Activated CD4-positive, alpha-beta T cell treated with anti-CD3 and anti-CD28 coated beads for 36 hours (primary cell): ENCODE measurements at regions of chr15 and their contacts with region 1.

Region 1: DNA sequence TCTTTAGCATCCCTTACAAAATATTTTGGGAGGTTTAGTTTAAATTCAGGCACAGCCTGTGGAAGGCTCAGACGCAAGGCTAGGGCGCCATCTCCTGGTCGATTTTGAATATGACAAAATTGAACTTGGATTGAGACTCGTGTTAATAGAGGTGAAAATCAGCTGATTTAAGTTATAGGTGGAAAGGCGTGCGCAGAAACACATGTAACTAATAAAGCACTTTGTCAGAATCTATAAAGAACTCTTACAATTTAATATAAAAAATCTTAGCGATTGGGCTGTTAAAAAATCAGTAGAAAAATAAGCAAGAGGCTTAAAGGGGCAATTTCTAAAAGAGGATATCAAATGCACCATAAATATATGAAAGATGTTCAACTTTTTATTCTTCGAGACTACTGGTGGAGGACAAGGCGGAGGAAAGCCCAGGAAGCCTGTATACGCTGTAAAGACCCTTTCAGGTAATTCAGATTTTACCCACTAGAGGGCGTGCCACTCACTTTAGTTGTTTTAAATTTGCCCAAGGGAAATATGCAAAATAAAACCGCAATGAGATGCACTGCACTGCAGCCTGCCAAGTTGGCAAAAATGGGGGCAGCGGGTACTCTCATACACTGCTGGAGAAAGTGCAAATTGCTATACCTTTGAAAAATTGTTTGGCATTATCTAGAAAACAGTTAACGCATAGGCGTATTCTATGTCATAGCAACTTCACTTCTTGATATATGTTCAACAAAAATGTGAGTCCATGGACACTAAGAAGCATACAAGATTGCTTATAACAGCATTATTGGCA is 64.7 kb downstream of the SLC30A4 start:
- DNase-seq: peak; percentile 82
- ATAC-seq: peak; percentile 59
- H3K4me3 Mint-ChIP-seq: peak overlapping the region; percentile 73
- H3K27ac Mint-ChIP-seq: peak overlapping the region; percentile 80
- H3K4me1 Mint-ChIP-seq: peaks cover 44% of the 10 kb centered on the region
- H3K27me3 Mint-ChIP-seq: no peaks in the 10 kb centered on the region

Region 2: GRCh38 chr15:43913026-43913927 is 1544.6 kb before region 1 on chr15:
- CTCF ChIA-PET with region 1: no interaction called
- POLR2A ChIA-PET with region 1: no interaction called
- intact Hi-C with region 1: no loop called
- DNase-seq: peak; percentile 26
- ATAC-seq: peak; percentile 68
- H3K4me3 Mint-ChIP-seq: no peak overlapping the region
- H3K27ac Mint-ChIP-seq: no peak overlapping the region
- H3K4me1 Mint-ChIP-seq: peaks cover 3% of the 10 kb centered on the region
- H3K27me3 Mint-ChIP-seq: peaks cover 2% of the 10 kb centered on the region

Region 3: DNA sequence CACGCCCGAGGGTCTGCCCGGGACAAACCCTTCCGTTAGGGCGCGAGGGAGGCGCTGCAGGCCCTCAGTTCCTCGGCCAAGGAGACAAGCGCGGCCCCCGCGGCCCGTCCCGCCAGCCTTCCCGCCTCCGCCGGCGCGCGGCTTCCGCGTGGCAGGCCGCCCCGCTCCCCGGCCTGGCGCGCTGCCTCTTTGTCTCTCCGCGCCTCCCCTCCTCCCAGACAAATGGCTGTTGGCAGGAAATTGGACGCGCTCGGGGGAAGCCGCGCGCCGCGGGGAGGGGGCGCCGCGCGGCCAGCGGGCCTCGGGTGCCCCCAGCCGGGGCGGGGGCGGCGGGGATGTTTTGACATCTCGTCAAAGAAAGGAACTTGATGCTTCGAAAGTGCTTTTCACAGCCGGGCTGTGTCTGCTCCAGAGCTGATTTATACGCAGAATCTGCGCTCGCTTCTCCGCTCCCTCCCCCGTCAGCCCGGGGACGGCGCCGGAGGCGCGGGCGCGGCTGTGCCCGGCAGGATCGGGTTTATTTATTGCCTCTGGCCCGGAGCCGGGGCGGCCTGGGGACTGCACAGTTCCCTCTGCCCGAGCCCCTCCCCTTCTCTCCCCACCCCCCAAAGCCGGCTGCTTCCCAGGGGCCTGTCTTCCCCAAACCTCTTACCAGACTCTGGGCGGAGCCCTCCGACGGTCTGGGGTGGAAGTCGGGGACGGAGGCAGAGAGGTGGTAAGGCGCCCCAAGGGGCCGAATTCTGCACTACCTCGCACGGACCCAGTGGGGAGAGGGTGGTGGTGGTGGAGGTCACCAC is 290.8 kb before region 1 on chr15:
- CTCF ChIA-PET with region 1: interaction called, 5 read pairs
- POLR2A ChIA-PET with region 1: no interaction called
- intact Hi-C with region 1: loop called (anchors 5 kb)
- DNase-seq: peak; percentile 91
- ATAC-seq: peak; percentile 93
- H3K4me3 Mint-ChIP-seq: peak overlapping the region; percentile 69
- H3K27ac Mint-ChIP-seq: peak overlapping the region; percentile 77
- H3K4me1 Mint-ChIP-seq: peaks cover 9% of the 10 kb centered on the region
- H3K27me3 Mint-ChIP-seq: no peaks in the 10 kb centered on the region

Region 4: DNA sequence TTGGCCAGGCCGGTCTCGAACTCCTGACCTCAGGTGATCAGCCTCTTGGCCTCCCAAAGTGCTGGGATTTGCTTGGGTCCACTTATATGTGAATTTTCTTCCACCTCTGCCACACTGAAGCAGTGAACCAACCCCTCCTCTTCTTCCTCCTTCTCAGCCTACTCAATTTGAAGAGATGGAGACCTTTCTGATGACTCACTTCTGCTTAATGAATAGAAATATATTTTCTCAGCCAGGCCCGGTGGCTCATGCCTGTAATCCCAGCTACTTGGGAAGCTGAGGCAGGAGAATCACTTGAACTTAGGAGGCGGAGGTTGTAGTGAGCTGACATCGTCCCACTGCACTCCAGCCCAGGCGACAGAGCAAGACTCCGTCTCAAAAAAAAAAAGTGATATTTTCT is 32.7 kb before region 1 on chr15:
- CTCF ChIA-PET with region 1: interaction called, 93 read pairs
- POLR2A ChIA-PET with region 1: no interaction called
- intact Hi-C with region 1: loop called (anchors 1 kb)
- DNase-seq: no peak
- ATAC-seq: no peak
- H3K4me3 Mint-ChIP-seq: no peak overlapping the region
- H3K27ac Mint-ChIP-seq: no peak overlapping the region
- H3K4me1 Mint-ChIP-seq: no peaks in the 10 kb centered on the region
- H3K27me3 Mint-ChIP-seq: no peaks in the 10 kb centered on the region

Region 5: GRCh38 chr15:45481135-45481534 is 23.3 kb after region 1 on chr15:
- CTCF ChIA-PET with region 1: interaction called, 13 read pairs
- POLR2A ChIA-PET with region 1: no interaction called
- intact Hi-C with region 1: no loop called
- DNase-seq: no peak
- ATAC-seq: no peak
- H3K4me3 Mint-ChIP-seq: no peak overlapping the region
- H3K27ac Mint-ChIP-seq: no peak overlapping the region
- H3K4me1 Mint-ChIP-seq: no peaks in the 10 kb centered on the region
- H3K27me3 Mint-ChIP-seq: no peaks in the 10 kb centered on the region

Region 6: GRCh38 chr15:45604326-45604725 is 146.5 kb after region 1 on chr15:
- CTCF ChIA-PET with region 1: interaction called, 10 read pairs
- POLR2A ChIA-PET with region 1: no interaction called
- intact Hi-C with region 1: no loop called
- DNase-seq: no peak
- ATAC-seq: no peak
- H3K4me3 Mint-ChIP-seq: no peak overlapping the region
- H3K27ac Mint-ChIP-seq: peak overlapping the region; percentile 43
- H3K4me1 Mint-ChIP-seq: no peaks in the 10 kb centered on the region
- H3K27me3 Mint-ChIP-seq: no peaks in the 10 kb centered on the region

Region 7: GRCh38 chr15:45705510-45706473 is 248.0 kb after region 1 on chr15:
- CTCF ChIA-PET with region 1: no interaction called
- POLR2A ChIA-PET with region 1: no interaction called
- intact Hi-C with region 1: loop called in 1 of 2 experiments (anchors 1 kb)
- DNase-seq: peak; percentile 84
- ATAC-seq: peak; percentile 89
- H3K4me3 Mint-ChIP-seq: peak overlapping the region; percentile 80
- H3K27ac Mint-ChIP-seq: peak overlapping the region; percentile 76
- H3K4me1 Mint-ChIP-seq: peaks cover 14% of the 10 kb centered on the region
- H3K27me3 Mint-ChIP-seq: peaks cover 3% of the 10 kb centered on the region